ENCODE measurements at regions of chr19 and their contacts with region 1.

Region 1: DNA sequence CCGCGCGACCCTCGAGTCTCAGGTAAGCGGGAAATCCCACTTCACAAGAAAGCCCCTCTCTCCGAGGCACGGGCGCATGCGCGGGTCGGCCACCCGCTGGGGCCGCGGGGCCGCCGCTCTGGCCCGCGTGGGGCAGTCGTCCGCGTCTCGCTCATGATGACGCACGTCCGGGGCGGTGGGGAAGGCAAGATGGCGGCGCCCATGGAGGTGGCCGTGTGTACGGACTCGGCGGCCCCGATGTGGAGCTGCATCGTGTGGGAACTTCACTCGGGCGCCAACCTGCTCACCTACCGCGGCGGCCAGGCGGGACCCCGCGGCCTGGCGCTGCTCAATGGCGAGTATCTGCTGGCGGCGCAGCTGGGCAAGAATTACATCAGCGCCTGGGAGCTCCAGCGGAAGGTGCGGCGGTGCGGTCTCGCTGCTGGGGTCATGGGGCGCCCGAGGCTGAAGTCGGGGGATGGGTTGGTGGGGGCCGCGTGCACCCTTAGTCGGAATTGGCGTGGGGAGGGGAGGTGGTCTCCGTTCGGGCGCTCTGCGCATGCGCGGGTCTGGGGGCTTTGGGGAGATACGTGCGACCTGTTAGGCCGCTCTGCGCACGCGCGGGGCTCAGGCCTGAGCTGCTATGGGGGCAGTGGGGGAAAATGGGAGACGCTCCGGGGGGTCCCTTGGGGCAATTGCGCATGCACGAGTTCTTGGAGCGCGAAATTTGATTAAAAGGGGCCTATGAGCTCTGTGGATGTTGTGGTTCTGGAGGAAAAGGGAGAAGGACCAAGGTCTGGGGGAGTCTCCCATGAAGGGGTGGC is at the start of gene WDR18:
- DNase-seq: peak; percentile 97

Region 2: DNA sequence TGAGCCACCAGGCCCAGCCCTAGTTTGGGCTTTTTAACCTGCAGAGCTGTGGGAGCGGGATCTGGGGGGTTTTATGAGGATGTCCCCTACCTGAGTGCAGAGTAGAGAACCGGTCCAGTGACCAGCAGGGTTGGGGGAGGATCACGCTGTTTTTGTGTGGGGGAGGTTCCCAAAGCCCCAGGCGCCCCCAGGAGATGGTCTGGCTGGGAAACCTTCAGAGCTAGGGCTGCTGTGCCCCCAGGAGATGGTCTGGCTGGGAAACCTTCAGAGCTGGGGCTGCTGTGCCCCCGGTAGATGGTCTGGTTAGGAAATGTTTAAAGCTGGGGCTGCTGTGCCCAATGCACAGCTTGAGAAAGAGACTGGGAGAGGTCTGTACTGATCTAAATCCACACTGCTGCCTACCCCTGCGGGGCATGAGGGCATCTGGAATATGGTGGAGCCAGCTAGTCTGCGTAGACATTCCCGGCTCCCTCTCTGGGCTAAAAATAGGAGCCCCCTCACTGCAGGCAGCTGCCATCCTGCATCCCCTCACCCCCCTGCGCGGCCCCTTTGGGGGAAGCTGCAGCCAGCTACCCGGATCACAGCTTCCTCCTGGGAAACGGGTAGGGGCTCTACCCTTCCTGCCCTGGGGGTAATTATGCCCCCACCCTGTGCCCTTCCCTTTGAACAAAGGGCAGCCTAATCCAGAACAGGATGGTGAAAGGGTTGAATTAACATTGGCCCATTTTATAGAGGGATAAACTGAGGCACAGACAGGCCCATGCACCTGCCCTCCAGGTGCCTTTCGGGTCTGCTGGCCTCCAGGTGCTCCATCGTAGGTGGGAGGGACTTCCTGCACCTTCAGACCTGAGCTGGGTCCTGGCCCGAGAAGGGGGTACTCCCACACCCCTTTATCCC is 60.8 kb before region 1 on chr19:
- CTCF ChIA-PET with region 1: interaction called, 7 read pairs
- POLR2A ChIA-PET with region 1: interaction called, 11 read pairs
- DNase-seq: no peak

Measured in HEK293T (cell line).